Tibial artery (tissue), 4 donors: ENCODE measurements at regions of chr2 and their contacts with region 1.

Region 1: GRCh38 chr2:38978908-38979307 is 89.2 kb downstream of the ARHGEF33 start:
- DNase-seq: no peak
- H3K4me3 ChIP-seq: no peak overlapping the region
- H3K27ac ChIP-seq: no peak overlapping the region
- H3K4me1 ChIP-seq: no peaks in the 10 kb centered on the region
- H3K27me3 ChIP-seq: no peaks in the 10 kb centered on the region
- CTCF ChIP-seq: no peak

Region 2: DNA sequence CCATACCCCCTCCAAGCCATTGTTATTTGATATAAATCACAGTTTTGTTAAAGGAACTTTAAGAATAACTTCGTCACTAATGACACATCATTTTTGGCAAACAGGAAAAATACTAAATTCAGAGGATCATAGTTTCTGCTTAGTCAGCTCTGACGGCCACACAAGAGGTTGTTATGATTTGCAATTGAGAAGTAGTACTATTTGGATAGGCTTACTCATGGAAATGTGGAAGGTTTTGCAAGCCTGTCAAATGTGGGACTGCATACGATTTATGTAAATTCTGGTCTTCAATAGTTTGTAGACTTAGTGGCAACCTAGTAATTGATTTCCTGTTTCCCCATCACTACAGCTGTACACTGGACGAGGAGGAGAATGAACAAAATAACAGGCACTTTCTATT is 18.9 kb after region 1 on chr2:
- intact Hi-C with region 1: loop called (anchors 1 kb)
- DNase-seq: peak in 1 of 2 donors; percentile 26
- H3K4me3 ChIP-seq: no peak overlapping the region
- H3K27ac ChIP-seq: no peak overlapping the region
- H3K4me1 ChIP-seq: no peaks in the 10 kb centered on the region
- H3K27me3 ChIP-seq: no peaks in the 10 kb centered on the region
- CTCF ChIP-seq: no peak